ENCODE measurements at regions of chr3 and their contacts with region 1.

Region 1: DNA sequence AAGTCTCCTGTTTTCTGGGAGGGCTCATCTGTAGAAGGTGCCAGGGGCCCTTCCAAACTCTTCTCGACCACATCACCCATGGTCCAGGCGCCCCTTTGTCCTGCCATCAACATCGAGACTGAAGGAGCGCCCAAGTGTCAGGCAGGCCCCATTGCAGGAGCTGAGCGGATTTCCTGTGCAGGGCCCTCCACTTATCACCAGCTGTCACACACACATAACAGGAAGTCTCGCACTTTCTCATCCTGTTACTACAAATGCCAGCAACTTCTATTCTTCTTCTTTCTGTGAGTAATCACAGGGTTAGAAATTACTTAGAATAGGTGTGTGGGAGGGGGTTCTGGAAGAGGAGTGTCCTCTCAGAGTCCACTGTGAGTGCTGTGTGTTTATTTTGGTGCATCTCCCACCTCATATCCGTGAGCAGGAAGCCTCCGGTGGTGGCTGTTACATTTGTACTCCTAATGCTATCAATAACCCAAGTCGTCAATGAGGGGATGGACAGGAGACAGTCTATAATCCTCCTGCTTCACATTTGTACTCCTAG is at the start of gene KLHL6:
- DNase-seq: peak; percentile 69
- H3K4me3 Mint-ChIP-seq: peak within 1 kb of the TSS; percentile 100
- H3K27ac Mint-ChIP-seq: peak within 1 kb of the TSS; percentile 100
- H3K4me1 Mint-ChIP-seq: peaks cover 50% of the 10 kb centered on the region
- H3K27me3 Mint-ChIP-seq: no peaks in the 10 kb centered on the region
- total RNA-seq, gene KLHL6: 29.5 and 29.7 TPM in 2 replicates

Region 2: GRCh38 chr3:183099026-183099837 is 456.4 kb before region 1 on chr3 and contains the start of gene MCCC1:
- intact Hi-C with region 1: no loop called
- DNase-seq: peak; percentile 97
- H3K4me3 Mint-ChIP-seq: peak within 1 kb of the TSS; percentile 96
- H3K27ac Mint-ChIP-seq: peak within 1 kb of the TSS; percentile 92
- H3K4me1 Mint-ChIP-seq: peaks cover 28% of the 10 kb centered on the region
- H3K27me3 Mint-ChIP-seq: no peaks in the 10 kb centered on the region
- total RNA-seq, gene MCCC1: 25.8 and 31.2 TPM in 2 replicates

Region 3: DNA sequence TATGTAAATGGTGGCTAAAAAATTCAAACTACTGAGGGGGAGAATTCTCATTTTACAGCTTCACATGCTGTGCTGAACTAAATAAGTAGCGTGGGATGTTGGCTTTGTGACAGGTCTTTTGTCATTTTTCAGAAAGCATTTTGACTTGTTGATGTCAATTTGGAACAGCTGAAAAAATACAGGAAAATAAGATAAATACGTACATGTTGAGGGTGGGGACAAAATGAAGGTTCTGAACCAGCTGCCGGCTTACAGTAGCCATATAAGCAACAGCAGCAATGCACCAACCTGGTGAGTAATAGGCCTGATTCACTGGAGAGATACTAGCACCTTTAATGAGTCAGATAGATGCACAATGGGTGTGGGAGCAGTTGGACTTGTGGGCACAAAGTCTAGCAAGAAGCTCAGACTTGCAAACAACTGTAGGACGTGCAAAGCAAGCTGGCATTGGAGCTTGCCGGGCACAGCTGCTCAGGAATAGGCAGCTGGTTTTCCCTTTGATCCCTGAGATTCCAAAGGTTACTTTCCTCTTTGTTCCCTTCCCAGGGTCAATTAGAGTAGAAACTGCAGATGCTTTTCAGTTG is 289.7 kb before region 1 on chr3:
- intact Hi-C with region 1: loop called (anchors 5 kb)
- DNase-seq: no peak
- H3K4me3 Mint-ChIP-seq: peak overlapping the region; percentile 43
- H3K27ac Mint-ChIP-seq: no peak overlapping the region
- H3K4me1 Mint-ChIP-seq: no peaks in the 10 kb centered on the region
- H3K27me3 Mint-ChIP-seq: no peaks in the 10 kb centered on the region

Region 4: GRCh38 chr3:183339461-183340079 is 216.0 kb before region 1 on chr3:
- intact Hi-C with region 1: no loop called
- DNase-seq: no peak
- H3K4me3 Mint-ChIP-seq: no peak overlapping the region
- H3K27ac Mint-ChIP-seq: no peak overlapping the region
- H3K4me1 Mint-ChIP-seq: peaks cover 8% of the 10 kb centered on the region
- H3K27me3 Mint-ChIP-seq: no peaks in the 10 kb centered on the region

Region 5: DNA sequence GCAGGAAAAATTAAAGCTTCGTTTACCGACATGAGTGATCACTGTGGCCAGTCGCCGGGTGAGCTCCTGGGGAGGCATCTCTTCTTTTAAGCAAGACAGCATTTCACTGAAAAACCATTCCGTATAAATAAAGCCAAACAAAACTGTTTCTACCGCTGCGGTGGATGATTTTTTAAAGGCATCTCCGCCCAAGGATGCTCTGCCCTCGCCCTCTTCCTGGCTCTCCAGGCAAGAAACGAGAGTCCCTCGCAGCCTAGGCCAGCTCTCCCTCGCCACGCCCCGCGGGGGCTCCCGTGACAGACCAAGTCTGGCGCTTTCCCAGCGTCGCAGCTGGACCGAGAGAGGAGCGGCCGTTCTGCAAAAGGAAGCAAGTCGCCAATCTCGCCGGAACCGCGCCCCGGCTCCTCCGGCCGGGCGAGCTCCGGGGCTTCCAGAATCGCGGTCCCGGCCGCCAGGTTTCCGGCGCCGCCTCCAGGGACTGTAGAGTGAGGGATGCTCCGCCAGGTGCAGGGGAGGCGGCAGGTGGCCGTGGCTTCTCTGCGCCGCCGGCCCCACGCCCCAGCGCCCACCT is 127.7 kb before region 1 on chr3:
- intact Hi-C with region 1: loop called (anchors 1 kb)
- DNase-seq: peak; percentile 24
- H3K4me3 Mint-ChIP-seq: peak overlapping the region; percentile 81
- H3K27ac Mint-ChIP-seq: peak overlapping the region; percentile 14
- H3K4me1 Mint-ChIP-seq: peaks cover 39% of the 10 kb centered on the region
- H3K27me3 Mint-ChIP-seq: peaks cover 8% of the 10 kb centered on the region

Region 6: GRCh38 chr3:183481582-183481981 is 74.0 kb before region 1 on chr3:
- intact Hi-C with region 1: loop called (anchors 2 kb)
- DNase-seq: no peak
- H3K4me3 Mint-ChIP-seq: no peak overlapping the region
- H3K27ac Mint-ChIP-seq: no peak overlapping the region
- H3K4me1 Mint-ChIP-seq: peaks cover 6% of the 10 kb centered on the region
- H3K27me3 Mint-ChIP-seq: no peaks in the 10 kb centered on the region

Region 7: DNA sequence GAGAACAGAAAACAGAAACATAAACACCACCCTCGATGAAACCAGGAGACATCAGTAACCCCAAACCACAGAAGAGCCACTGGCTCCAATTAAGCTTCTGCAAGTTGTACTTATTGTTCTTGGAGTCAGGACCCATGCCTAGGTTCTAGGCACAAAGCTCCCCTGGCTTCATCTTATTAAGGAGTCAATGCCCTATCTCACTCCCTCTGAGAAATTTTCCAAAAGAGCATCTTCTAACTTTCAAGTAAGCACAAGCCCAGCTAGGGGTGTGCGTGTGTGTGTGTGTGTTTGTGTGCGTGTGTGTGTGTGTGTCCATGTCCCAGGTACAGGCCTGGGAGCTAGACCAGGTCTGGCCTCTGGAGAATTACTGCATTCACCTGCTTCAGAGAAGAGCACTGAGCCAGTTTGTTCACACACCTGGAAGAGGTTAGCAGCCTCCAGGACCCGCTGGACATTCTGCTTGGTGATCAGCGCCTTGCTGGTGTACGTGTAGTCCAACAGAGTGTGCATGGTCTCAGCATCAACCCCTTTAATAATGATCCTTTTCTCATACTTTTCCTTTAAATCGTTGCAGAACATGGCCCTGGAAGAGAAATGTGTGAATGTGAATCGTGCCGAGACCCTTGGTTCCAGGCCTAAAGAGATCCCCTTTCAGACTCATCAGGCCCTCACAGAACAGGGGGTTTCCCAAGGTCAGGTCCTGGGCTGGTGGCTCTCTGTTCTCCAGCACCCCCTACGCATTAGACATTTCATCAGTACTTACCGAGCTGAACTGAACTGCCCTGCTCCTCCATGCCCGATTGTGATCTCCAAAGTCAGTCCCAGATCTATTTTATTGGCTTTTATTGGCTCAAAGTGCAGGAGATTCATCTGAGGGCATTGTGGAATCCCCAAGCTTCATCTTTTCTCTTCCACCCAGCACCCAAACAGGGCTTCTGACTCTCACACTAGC is 27.9 kb before region 1 on chr3:
- intact Hi-C with region 1: loop called (anchors 1 kb)
- DNase-seq: no peak
- H3K4me3 Mint-ChIP-seq: peak overlapping the region; percentile 31
- H3K27ac Mint-ChIP-seq: peak overlapping the region; percentile 64
- H3K4me1 Mint-ChIP-seq: peaks cover 42% of the 10 kb centered on the region
- H3K27me3 Mint-ChIP-seq: no peaks in the 10 kb centered on the region

Region 8: GRCh38 chr3:183697610-183698317 is 142.2 kb after region 1 on chr3 and contains the start of gene YEATS2:
- intact Hi-C with region 1: loop called (anchors 1 kb)
- DNase-seq: peak; percentile 66
- H3K4me3 Mint-ChIP-seq: peak within 1 kb of the TSS; percentile 97
- H3K27ac Mint-ChIP-seq: peak within 1 kb of the TSS; percentile 84
- H3K4me1 Mint-ChIP-seq: peaks cover 29% of the 10 kb centered on the region
- H3K27me3 Mint-ChIP-seq: no peaks in the 10 kb centered on the region
- total RNA-seq, gene YEATS2: 56.7 and 60.1 TPM in 2 replicates

Measured in activated T-helper 2 cell treated with anti-CD3 and anti-CD28 coated beads, Interferon-gamma antibody, Interleukin-2, Interleukin-4, amounts not matched to agents 10 μg/mL and 5 μg/mL and 100 μg/mL, durations not matched to agents 14 hours and 24 hours and 36 hours (primary cell).